ENCODE measurements at regions of chr3 and their contacts with region 1.

Region 1: GRCh38 chr3:33131331-33132018 is 17.7 kb downstream of the CRTAP start:
- DNase-seq: peak; percentile 43 to 48
- H3K4me3 ChIP-seq: no peak overlapping the region
- H3K27ac ChIP-seq: no peak overlapping the region
- H3K4me1 ChIP-seq: no peaks in the 10 kb centered on the region
- H3K27me3 ChIP-seq: no peaks in the 10 kb centered on the region
- CTCF ChIP-seq: peak; percentile 77

Region 2: DNA sequence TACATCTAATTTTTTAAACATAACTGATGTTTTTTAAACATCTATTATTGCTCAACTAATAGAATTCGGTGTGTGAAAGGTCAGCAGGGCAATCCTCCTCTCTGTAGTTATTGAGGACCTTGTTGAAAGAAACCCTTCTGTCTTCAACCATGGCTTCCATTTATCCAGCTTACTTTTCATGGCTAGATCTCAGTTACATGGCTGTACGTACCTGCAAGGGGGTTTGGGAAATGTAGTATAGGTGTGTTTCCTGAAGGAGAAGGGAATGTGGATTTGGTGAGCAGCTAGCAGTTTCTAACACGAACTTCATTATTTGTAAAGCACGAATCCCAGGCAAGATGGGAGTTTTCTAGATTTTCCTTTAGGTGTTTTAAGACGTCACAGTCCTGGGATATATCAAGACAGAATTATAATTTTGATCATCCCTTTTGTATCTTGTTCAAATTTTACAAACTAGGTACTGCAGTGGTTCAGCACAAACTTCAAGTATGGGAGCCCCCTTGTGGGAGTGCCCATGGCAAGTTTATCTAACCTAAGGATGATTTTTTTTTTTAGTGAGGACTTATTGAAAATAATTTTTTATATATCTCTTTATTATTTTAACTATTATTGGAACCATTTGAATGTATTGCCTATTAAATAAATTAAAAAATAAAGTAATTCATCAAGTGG is 187.4 kb after region 1 on chr3:
- CTCF ChIA-PET with region 1: no interaction called
- POLR2A ChIA-PET with region 1: no interaction called
- intact Hi-C with region 1: loop called (anchors 2 kb)
- DNase-seq: no peak
- H3K4me3 ChIP-seq: no peak overlapping the region
- H3K27ac ChIP-seq: no peak overlapping the region
- H3K4me1 ChIP-seq: peaks cover 34% of the 10 kb centered on the region
- H3K27me3 ChIP-seq: no peaks in the 10 kb centered on the region
- CTCF ChIP-seq: no peak

Region 3: GRCh38 chr3:33775363-33775762 is 643.9 kb after region 1 on chr3:
- CTCF ChIA-PET with region 1: interaction called, 12 read pairs
- POLR2A ChIA-PET with region 1: no interaction called
- intact Hi-C with region 1: loop called (anchors 5 kb)
- DNase-seq: no peak
- H3K4me3 ChIP-seq: no peak overlapping the region
- H3K27ac ChIP-seq: no peak overlapping the region
- H3K4me1 ChIP-seq: no peaks in the 10 kb centered on the region
- H3K27me3 ChIP-seq: no peaks in the 10 kb centered on the region
- CTCF ChIP-seq: no peak

Measured in PC-9 (cell line).